ENCODE measurements at regions of chr6 and their contacts with region 1.

Region 1: GRCh38 chr6:157034436-157035230 is 257.5 kb downstream of the ARID1B start:
- DNase-seq: no peak
- H3K4me3 ChIP-seq: no peak overlapping the region
- H3K27ac ChIP-seq: no peak overlapping the region
- H3K4me1 ChIP-seq: peaks cover 10% of the 10 kb centered on the region
- H3K27me3 ChIP-seq: no peaks in the 10 kb centered on the region
- CTCF ChIP-seq: peak; percentile 77

Region 2: GRCh38 chr6:156960525-156960924 is 74.1 kb before region 1 on chr6:
- CTCF ChIA-PET with region 1: interaction called, 13 read pairs
- POLR2A ChIA-PET with region 1: no interaction called
- intact Hi-C with region 1: no loop called
- DNase-seq: no peak
- H3K4me3 ChIP-seq: no peak overlapping the region
- H3K27ac ChIP-seq: no peak overlapping the region
- H3K4me1 ChIP-seq: peaks cover 12% of the 10 kb centered on the region; the same call in 1 of the 2 replicates
- H3K27me3 ChIP-seq: no peaks in the 10 kb centered on the region
- CTCF ChIP-seq: no peak

Region 3: GRCh38 chr6:157128235-157128775 is 93.7 kb after region 1 on chr6:
- CTCF ChIA-PET with region 1: no interaction called
- POLR2A ChIA-PET with region 1: no interaction called
- intact Hi-C with region 1: loop called (anchors 1 kb)
- DNase-seq: no peak
- H3K4me3 ChIP-seq: no peak overlapping the region
- H3K27ac ChIP-seq: no peak overlapping the region
- H3K4me1 ChIP-seq: peaks cover 23% of the 10 kb centered on the region
- H3K27me3 ChIP-seq: no peaks in the 10 kb centered on the region
- CTCF ChIP-seq: no peak

Region 4: DNA sequence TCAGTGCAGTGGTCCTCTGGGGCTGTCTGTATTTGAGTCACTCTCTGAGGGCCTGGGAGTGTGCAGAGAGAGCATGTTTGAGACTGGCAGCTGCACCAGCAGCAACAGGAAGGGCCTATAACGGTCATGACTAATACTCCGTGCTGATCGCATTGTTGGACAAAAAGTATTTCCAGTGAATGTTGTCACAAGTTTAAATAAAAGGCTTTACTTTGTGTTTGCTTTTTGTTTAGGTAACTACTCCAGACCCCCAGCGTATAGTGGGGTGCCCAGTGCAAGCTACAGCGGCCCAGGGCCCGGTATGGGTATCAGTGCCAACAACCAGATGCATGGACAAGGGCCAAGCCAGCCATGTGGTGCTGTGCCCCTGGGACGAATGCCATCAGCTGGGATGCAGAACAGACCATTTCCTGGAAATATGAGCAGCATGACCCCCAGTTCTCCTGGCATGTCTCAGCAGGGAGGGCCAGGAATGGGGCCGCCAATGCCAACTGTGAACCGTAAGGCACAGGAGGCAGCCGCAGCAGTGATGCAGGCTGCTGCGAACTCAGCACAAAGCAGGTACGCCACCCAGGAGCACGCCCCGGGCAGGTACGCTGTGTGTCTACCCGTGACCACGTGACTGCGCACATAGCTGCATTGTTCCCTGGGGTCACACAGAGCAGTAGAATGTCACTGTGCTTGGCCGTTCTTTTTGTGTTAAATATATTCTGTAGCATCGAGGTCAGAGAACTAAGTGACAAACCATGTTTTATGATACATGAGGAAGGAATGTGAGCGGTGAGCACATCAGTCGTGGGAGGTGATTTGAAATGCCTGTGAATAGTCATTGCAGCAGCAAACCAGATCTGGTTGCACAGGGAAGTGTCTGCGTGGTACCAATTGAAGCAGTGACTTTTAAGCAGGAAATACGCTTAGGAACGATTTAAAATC is 114.0 kb after region 1 on chr6:
- CTCF ChIA-PET with region 1: no interaction called
- POLR2A ChIA-PET with region 1: no interaction called
- intact Hi-C with region 1: loop called (anchors 2 kb)
- DNase-seq: peak; percentile 51 to 76
- H3K4me3 ChIP-seq: no peak overlapping the region
- H3K27ac ChIP-seq: no peak overlapping the region
- H3K4me1 ChIP-seq: no peaks in the 10 kb centered on the region
- H3K27me3 ChIP-seq: no peaks in the 10 kb centered on the region
- CTCF ChIP-seq: no peak

Region 5: GRCh38 chr6:157184202-157185020 is 149.8 kb after region 1 on chr6:
- CTCF ChIA-PET with region 1: no interaction called
- POLR2A ChIA-PET with region 1: no interaction called
- intact Hi-C with region 1: loop called (anchors 1 kb)
- DNase-seq: peak in 1 of 2 experiments; percentile 38
- H3K4me3 ChIP-seq: no peak overlapping the region
- H3K27ac ChIP-seq: no peak overlapping the region
- H3K4me1 ChIP-seq: peaks cover 48% of the 10 kb centered on the region
- H3K27me3 ChIP-seq: no peaks in the 10 kb centered on the region
- CTCF ChIP-seq: peak; percentile 72

Region 6: DNA sequence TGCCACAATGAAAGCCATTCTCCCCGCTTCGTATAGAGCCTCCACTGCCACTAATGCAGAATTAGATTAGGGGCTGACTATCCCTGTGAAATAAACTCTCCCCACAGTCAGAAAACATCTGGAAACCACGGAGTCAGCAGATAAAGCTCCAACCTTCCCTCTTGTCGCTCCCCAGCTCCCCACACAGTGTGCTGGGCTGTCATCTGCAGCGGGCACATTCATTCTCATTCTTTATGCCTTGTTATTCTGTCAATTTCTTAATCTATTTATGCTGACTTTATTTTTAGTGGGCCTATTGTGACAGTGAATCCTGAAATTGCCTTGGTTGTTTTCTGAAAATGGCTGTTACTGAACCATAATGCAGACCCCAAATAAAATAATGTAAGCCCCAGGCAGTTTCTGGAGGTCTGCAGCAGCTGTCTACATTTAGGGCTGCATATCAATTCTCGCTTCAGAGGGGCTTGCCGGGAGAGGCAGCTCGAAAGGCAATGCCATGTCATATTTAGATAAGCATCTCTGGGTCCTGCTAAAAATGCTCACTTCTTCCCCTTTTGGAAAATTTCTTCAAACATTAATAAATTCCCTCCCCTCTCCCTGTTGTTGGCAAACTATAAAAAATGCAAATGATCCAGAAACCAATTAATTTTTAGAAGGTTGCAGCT is 217.1 kb after region 1 on chr6:
- CTCF ChIA-PET with region 1: interaction called, 14 read pairs
- POLR2A ChIA-PET with region 1: no interaction called
- intact Hi-C with region 1: no loop called
- DNase-seq: peak in 1 of 2 experiments; percentile 13
- H3K4me3 ChIP-seq: no peak overlapping the region
- H3K27ac ChIP-seq: no peak overlapping the region
- H3K4me1 ChIP-seq: no peaks in the 10 kb centered on the region
- H3K27me3 ChIP-seq: peaks cover 16% of the 10 kb centered on the region; the same call in 1 of the 2 replicates
- CTCF ChIP-seq: no peak

Measured in PC-9 (cell line).